ENCODE measurements at regions of chr16 and their contacts with region 1.

Region 1: DNA sequence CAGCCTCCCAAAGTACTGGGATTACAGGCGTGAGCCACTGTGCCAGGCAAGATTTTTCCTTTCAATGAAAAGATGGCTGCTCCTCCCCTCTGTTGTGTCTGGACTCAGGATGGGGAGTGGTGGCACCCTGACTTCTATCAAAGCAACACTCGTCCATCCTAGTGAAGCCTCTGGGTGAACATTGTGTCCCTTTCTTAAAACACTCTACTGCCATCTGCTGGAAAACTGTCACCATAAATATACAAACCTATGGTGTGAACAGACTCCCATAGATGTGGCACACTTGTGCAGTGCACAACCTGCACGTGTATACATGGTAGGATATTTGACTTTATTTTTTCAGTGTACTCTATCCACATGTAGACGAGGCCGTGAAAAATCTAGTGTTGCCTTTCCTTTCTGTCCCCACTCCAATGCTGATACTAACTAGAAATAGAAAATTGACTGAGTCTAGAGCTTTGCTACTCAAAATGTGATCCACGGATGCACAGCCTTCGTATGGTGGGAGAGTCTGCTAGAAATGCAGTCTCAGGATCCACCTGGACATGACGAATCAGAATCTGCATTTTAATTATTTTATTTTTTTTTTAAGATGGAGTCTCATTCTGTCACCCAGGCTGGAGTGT is 55.9 kb upstream of the PLCG2 start:
- DNase-seq: peak; percentile 82
- H3K4me3 ChIP-seq: no peak overlapping the region
- H3K27ac ChIP-seq: no peak overlapping the region
- H3K4me1 ChIP-seq: no peaks in the 10 kb centered on the region
- H3K27me3 ChIP-seq: no peaks in the 10 kb centered on the region
- CTCF ChIP-seq: peak; percentile 62 to 85 (median 80)
- POLR2A ChIP-seq: no peak

Region 2: DNA sequence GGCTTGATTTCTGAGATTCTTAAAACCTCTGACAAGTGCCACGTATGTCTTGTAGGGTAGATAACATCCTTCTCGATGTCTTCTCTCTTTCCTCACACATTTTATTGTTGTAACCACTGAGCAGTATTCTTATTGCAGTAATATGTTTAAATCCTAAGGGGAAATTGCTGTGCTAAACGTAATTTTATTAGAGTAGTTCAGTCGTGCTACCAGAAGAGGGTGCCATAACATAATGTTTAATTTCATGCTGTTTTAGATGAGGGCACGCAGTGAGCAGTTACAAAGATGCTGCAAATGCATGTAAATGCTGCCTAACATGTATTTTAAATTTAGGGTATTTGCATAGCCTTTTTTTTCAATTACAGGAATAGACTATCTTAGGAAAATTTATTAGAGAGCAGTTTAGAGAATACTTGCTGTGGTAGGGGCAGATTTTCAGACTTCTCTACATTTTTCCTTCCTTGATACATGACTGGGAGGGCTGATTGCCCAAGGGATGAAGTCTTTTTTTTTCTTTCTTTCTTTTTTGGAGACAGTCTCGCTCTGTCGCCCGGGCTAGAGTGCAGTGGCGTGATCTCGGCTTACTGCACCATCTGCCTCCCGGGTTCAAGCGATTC is 356.8 kb before region 1 on chr16:
- intact Hi-C with region 1: loop called (anchors 5 kb)
- DNase-seq: peak; percentile 19
- H3K4me3 ChIP-seq: no peak overlapping the region
- H3K27ac ChIP-seq: no peak overlapping the region
- H3K4me1 ChIP-seq: no peaks in the 10 kb centered on the region
- H3K27me3 ChIP-seq: no peaks in the 10 kb centered on the region
- CTCF ChIP-seq: peak; percentile 54 to 91 (median 71)
- POLR2A ChIP-seq: no peak

Region 3: GRCh38 chr16:81403616-81404373 is 319.4 kb before region 1 on chr16:
- intact Hi-C with region 1: loop called (anchors 2 kb)
- DNase-seq: peak; percentile 82
- H3K4me3 ChIP-seq: no peak overlapping the region
- H3K27ac ChIP-seq: no peak overlapping the region
- H3K4me1 ChIP-seq: no peaks in the 10 kb centered on the region
- H3K27me3 ChIP-seq: no peaks in the 10 kb centered on the region
- CTCF ChIP-seq: peak; percentile 92 to 98 (median 96)
- POLR2A ChIP-seq: no peak

Region 4: GRCh38 chr16:81623363-81624102 is 99.7 kb before region 1 on chr16:
- intact Hi-C with region 1: loop called (anchors 5 kb)
- DNase-seq: peak; percentile 54
- H3K4me3 ChIP-seq: no peak overlapping the region
- H3K27ac ChIP-seq: no peak overlapping the region
- H3K4me1 ChIP-seq: peaks cover 5% of the 10 kb centered on the region
- H3K27me3 ChIP-seq: no peaks in the 10 kb centered on the region
- CTCF ChIP-seq: peak in 3 of 4 experiments; percentile 69 to 79 (median 77)
- POLR2A ChIP-seq: no peak

Measured in prostate gland (tissue), 2 donors.